ENCODE measurements at regions of chr2 and their contacts with region 1.

Region 1: GRCh38 chr2:105235388-105236054 is 6.0 kb upstream of the GPR45 start:
- DNase-seq: peak; percentile 57
- H3K4me3 ChIP-seq: no peak overlapping the region
- H3K27ac ChIP-seq: no peak overlapping the region
- H3K4me1 ChIP-seq: peaks cover 9% of the 10 kb centered on the region
- H3K27me3 ChIP-seq: no peaks in the 10 kb centered on the region
- CTCF ChIP-seq: peak; percentile 68 to 78

Region 2: DNA sequence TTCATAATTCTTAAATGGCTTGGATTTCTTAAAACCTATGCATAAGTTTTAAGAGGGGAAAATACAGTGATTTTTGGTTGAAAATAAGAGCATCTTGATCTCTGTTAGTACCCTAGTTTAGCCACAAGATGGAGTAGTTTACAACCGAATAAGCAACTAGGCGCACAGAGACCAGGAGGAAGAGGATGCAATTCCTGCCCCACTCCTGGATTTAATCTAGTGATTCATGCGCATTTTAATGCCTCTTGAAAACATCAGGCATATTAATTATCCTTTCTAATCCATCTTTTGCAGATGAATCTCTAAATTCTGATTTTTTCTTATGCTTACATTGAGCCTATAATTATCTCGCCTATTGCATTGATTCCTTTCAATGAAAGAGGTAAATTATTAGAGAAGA is 121.0 kb before region 1 on chr2:
- CTCF ChIA-PET with region 1: interaction called, 4 read pairs
- dilution Hi-C with region 1: no loop called
- in situ Hi-C with region 1: loop called (anchors 5 kb)
- intact Hi-C with region 1: loop called (anchors 1 kb)
- DNase-seq: peak; percentile 14
- H3K4me3 ChIP-seq: no peak overlapping the region
- H3K27ac ChIP-seq: no peak overlapping the region
- H3K4me1 ChIP-seq: no peaks in the 10 kb centered on the region
- H3K27me3 ChIP-seq: no peaks in the 10 kb centered on the region
- CTCF ChIP-seq: peak; percentile 64 to 73

Measured in mammary epithelial cell (primary cell).